ENCODE measurements at regions of chr1 and their contacts with region 1.

Region 1: DNA sequence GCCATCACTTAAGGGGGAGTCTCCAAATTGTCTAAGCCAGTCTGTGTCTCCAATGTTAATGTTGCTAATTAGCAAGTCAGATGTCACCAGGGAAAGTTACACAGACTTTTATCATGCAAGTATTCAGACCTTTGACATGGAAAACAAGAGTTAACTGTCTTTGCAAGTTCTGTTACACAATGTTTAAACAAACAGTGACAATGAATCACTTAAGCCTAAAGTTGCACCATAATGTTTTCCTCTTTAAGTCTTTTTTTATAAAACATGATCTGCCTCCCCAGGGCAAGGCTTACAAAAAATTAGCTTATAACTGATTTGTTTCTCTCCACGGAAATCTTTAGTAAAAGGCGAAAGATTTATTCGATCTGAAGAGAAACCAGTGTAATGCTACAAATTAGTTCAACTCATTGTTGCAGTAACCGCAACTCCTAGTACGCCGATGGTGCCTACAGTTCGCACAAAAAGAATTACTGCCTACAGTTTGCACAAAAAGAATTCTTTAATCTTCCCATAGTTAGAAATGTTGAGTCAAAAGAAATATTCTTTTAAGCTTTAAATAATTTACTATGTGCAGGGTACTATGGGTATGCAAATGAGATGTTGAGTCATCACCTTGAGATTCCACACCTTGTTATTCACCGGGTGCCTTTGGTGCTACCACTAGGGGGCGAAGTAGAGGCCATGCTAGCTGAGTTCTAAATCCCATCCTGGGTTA is 45.3 kb downstream of the HHAT start:
- DNase-seq: peak; percentile 88
- ATAC-seq: peak; percentile 80
- H3K4me3 Mint-ChIP-seq: no peak overlapping the region
- H3K27ac Mint-ChIP-seq: peak overlapping the region; percentile 87
- H3K4me1 Mint-ChIP-seq: peaks cover 37% of the 10 kb centered on the region
- H3K27me3 Mint-ChIP-seq: no peaks in the 10 kb centered on the region
- CTCF ChIP-seq: peak; percentile 89

Region 2: GRCh38 chr1:210143465-210144062 is 230.5 kb before region 1 on chr1:
- CTCF ChIA-PET with region 1: no interaction called
- POLR2A ChIA-PET with region 1: no interaction called
- intact Hi-C with region 1: no loop called
- DNase-seq: peak; percentile 86
- ATAC-seq: no peak
- H3K4me3 Mint-ChIP-seq: no peak overlapping the region
- H3K27ac Mint-ChIP-seq: no peak overlapping the region
- H3K4me1 Mint-ChIP-seq: no peaks in the 10 kb centered on the region
- H3K27me3 Mint-ChIP-seq: peaks cover 17% of the 10 kb centered on the region
- CTCF ChIP-seq: peak; percentile 70

Region 3: GRCh38 chr1:210328746-210329503 is 45.1 kb before region 1 on chr1 and contains the start of gene HHAT:
- CTCF ChIA-PET with region 1: interaction called, 20 read pairs
- POLR2A ChIA-PET with region 1: interaction called, 85 read pairs
- intact Hi-C with region 1: loop called (anchors 2 kb)
- DNase-seq: peak; percentile 75
- ATAC-seq: peak; percentile 67
- H3K4me3 Mint-ChIP-seq: peak within 1 kb of the TSS; percentile 87
- H3K27ac Mint-ChIP-seq: peak within 1 kb of the TSS; percentile 92
- H3K4me1 Mint-ChIP-seq: peaks cover 36% of the 10 kb centered on the region
- H3K27me3 Mint-ChIP-seq: peaks cover 5% of the 10 kb centered on the region
- CTCF ChIP-seq: no peak
- total RNA-seq, gene HHAT: 0.99 to 1.4 TPM

Region 4: DNA sequence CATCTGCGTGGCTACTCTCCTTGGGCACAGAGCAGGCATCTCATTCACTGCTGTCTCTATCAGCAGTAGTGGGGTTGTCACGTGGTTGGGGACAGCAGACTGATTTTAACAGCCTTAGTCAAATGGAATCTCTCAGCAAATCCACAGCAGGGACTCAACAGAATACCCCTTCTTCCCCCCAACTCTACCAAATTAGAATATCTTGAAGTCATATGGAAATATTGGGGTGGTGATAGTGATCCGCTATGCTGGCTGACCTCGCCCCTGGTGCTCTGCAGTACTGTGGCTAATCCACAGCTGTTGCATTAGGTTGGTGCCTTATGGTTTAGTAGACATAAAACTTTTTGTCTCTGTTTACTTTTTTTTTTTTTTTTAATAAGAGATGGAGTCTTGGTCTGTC is 21.5 kb before region 1 on chr1:
- CTCF ChIA-PET with region 1: interaction called, 8 read pairs
- POLR2A ChIA-PET with region 1: interaction called, 18 read pairs
- intact Hi-C with region 1: no loop called
- DNase-seq: no peak
- ATAC-seq: no peak
- H3K4me3 Mint-ChIP-seq: no peak overlapping the region
- H3K27ac Mint-ChIP-seq: no peak overlapping the region
- H3K4me1 Mint-ChIP-seq: peaks cover 5% of the 10 kb centered on the region
- H3K27me3 Mint-ChIP-seq: no peaks in the 10 kb centered on the region
- CTCF ChIP-seq: no peak

Region 5: DNA sequence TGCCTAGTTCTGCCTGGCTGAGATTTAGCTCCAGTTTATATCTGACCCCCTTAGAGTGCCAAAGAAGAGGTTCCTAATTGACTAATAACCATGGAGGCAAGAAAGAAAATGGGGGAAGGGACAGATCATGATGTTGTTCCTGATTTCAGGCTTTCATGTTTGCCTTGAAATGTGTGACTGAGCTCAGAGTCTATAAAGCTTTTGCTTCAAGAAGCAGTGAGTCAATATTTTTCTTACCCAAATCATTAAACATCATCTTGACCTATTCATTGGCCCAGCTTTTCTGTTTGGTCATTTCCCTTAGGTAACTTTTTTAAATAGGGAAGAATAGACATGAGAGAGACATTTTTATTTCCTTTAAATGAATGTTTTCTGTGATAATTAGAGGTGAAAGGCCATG is 10.6 kb after region 1 on chr1:
- CTCF ChIA-PET with region 1: interaction called, 42 read pairs
- POLR2A ChIA-PET with region 1: interaction called, 29 read pairs
- intact Hi-C with region 1: no loop called
- DNase-seq: no peak
- ATAC-seq: no peak
- H3K4me3 Mint-ChIP-seq: no peak overlapping the region
- H3K27ac Mint-ChIP-seq: no peak overlapping the region
- H3K4me1 Mint-ChIP-seq: no peaks in the 10 kb centered on the region
- H3K27me3 Mint-ChIP-seq: no peaks in the 10 kb centered on the region
- CTCF ChIP-seq: no peak

Region 6: DNA sequence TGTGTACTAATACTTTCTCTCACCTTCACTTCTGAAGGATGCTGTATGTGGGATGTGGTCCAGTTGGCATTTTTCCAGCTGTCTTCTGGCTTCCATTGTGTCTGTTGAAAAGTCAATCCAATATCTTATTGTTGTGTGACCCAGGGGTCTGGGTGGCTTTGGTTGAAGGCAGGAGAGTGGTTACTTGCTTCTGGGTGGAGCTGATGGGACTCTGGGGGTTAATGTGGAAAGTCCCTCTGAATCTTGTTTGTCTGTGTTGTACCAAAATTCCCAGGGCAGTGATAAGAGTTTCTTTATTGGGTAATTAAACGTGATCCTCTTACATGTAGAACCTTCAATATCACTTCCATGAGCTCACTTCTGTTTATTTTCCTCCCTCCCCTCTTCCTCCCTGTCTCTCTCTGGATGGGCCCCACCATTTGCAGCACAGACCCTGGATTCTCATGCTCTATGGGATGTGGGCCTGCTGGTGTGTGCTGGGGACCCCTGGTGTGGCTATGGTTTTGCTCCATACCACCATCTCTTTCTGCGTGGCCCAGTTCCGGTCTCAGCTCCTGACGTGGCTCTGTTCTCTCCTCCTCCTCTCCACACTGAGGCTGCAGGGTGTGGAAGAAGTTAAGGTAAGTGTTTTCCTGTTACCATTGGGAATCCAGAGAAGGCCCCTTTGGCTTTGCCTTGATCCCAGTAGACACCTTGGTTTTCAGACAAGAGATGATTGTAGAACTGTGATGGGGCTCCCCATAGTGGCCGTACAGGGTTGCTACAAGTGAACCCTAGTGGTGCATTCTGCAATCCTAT is 26.2 kb after region 1 on chr1:
- CTCF ChIA-PET with region 1: interaction called, 114 read pairs
- POLR2A ChIA-PET with region 1: interaction called, 78 read pairs
- intact Hi-C with region 1: loop called (anchors 1 kb)
- DNase-seq: peak; percentile 85
- ATAC-seq: peak; percentile 77
- H3K4me3 Mint-ChIP-seq: peak overlapping the region; percentile 38
- H3K27ac Mint-ChIP-seq: peak overlapping the region; percentile 91
- H3K4me1 Mint-ChIP-seq: peaks cover 42% of the 10 kb centered on the region
- H3K27me3 Mint-ChIP-seq: peaks cover 2% of the 10 kb centered on the region
- CTCF ChIP-seq: peak; percentile 78

Region 7: GRCh38 chr1:210434223-210434622 is 60.2 kb after region 1 on chr1:
- CTCF ChIA-PET with region 1: no interaction called
- POLR2A ChIA-PET with region 1: no interaction called
- intact Hi-C with region 1: no loop called
- DNase-seq: no peak
- ATAC-seq: no peak
- H3K4me3 Mint-ChIP-seq: no peak overlapping the region
- H3K27ac Mint-ChIP-seq: no peak overlapping the region
- H3K4me1 Mint-ChIP-seq: no peaks in the 10 kb centered on the region
- H3K27me3 Mint-ChIP-seq: no peaks in the 10 kb centered on the region
- CTCF ChIP-seq: no peak

Region 8: GRCh38 chr1:210464519-210465039 is 90.5 kb after region 1 on chr1:
- CTCF ChIA-PET with region 1: no interaction called
- POLR2A ChIA-PET with region 1: no interaction called
- intact Hi-C with region 1: no loop called
- DNase-seq: no peak
- ATAC-seq: peak; percentile 94
- H3K4me3 Mint-ChIP-seq: no peak overlapping the region
- H3K27ac Mint-ChIP-seq: no peak overlapping the region
- H3K4me1 Mint-ChIP-seq: peaks cover 10% of the 10 kb centered on the region
- H3K27me3 Mint-ChIP-seq: no peaks in the 10 kb centered on the region
- CTCF ChIP-seq: no peak